Activated CD4-positive, alpha-beta memory T cell treated with anti-CD3 and anti-CD28 coated beads, Interleukin-2, amount 10 ng/mL, durations not matched to agents 7 days and 5 days (primary cell): ENCODE measurements at regions of chr19 and their contacts with region 1.

Region 1: GRCh38 chr19:29622138-29623070 is 16.3 kb downstream of the POP4 start:
- DNase-seq: peak; percentile 44
- H3K4me3 Mint-ChIP-seq: peak overlapping the region; percentile 86
- H3K27ac Mint-ChIP-seq: peak overlapping the region; percentile 97
- H3K4me1 Mint-ChIP-seq: peaks cover 65% of the 10 kb centered on the region
- H3K27me3 Mint-ChIP-seq: no peaks in the 10 kb centered on the region

Region 2: DNA sequence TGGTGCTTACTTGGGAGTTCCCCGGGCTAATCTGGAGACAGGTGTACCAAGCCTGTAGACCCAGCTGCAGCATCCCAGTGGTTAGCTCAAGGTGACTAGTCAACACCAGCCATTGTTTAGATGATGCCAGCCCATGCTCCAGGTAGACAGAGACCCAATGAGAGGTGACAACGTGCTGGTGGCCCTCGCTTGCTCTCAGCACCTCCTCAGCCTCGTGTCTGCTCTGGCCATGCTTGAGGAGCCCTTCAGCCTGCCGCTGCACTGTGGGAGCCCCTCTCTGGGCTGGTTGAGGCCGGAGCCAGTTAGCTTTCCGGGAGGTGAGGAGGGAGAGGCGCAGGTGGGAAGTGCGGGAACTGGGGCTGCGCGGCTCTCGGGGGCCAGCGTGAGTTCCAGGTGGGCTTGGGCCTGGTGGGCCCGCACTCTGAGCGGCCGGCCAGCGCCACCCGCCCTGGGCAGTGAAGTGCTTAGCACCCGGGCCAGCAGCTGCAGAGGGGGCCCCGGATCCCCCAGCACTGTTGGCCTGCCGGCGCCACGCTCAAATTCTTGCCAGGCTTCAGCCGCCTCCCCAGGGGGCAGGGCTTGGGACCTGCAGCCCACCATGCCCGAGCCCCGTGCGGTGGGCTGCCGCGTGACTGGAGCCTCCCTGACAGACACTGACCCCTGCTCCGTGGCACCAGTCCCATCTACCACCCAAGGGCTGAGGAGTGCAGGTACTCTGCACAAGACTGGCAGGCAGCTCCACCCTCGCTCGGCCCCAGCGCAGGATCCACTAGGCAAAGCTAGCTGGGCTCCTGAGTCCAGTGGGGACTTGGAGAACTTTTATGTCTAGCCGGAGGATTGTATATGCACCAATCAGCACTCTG is 182.5 kb before region 1 on chr19:
- CTCF ChIA-PET with region 1: no interaction called
- POLR2A ChIA-PET with region 1: no interaction called
- DNase-seq: no peak
- H3K4me3 Mint-ChIP-seq: no peak overlapping the region
- H3K27ac Mint-ChIP-seq: no peak overlapping the region
- H3K4me1 Mint-ChIP-seq: no peaks in the 10 kb centered on the region
- H3K27me3 Mint-ChIP-seq: no peaks in the 10 kb centered on the region

Region 3: DNA sequence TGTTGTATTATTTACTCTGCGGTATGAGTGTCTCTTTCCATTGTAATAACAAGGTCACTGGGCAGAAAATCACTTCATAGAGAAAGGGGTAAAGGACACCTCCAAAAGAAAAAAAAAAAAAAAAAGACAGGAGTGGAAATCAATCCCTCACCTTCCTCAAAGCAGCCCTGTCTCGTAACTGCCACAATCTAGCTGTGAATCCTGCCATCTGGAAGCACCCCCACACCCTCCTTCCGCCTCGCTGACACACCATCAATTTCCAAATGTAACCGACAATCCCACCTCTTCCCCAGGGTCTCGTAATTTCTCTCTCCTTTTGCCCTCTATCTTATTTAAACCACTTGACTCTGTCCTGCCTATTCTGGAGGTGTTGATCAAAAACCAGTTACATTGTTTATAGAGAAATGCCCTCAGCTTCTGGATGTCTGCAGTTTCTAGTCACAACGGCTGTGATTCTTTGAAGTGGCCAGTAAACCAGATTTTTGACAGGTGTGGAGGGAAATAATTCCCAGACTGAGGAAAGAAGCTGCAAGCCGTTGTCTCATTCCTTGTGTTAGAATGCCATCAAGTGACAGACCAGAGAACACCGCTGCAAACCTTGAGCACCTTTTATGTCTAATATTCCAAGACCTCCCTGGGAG is 25.4 kb before region 1 on chr19:
- CTCF ChIA-PET with region 1: no interaction called
- POLR2A ChIA-PET with region 1: no interaction called
- DNase-seq: no peak
- H3K4me3 Mint-ChIP-seq: no peak overlapping the region
- H3K27ac Mint-ChIP-seq: no peak overlapping the region
- H3K4me1 Mint-ChIP-seq: no peaks in the 10 kb centered on the region
- H3K27me3 Mint-ChIP-seq: peaks cover 33% of the 10 kb centered on the region

Region 4: GRCh38 chr19:29634423-29635130 is 12.2 kb after region 1 on chr19:
- CTCF ChIA-PET with region 1: interaction called, 6 read pairs
- POLR2A ChIA-PET with region 1: interaction called, 14 read pairs
- DNase-seq: no peak
- H3K4me3 Mint-ChIP-seq: no peak overlapping the region
- H3K27ac Mint-ChIP-seq: no peak overlapping the region
- H3K4me1 Mint-ChIP-seq: no peaks in the 10 kb centered on the region
- H3K27me3 Mint-ChIP-seq: peaks cover 3% of the 10 kb centered on the region

Region 5: DNA sequence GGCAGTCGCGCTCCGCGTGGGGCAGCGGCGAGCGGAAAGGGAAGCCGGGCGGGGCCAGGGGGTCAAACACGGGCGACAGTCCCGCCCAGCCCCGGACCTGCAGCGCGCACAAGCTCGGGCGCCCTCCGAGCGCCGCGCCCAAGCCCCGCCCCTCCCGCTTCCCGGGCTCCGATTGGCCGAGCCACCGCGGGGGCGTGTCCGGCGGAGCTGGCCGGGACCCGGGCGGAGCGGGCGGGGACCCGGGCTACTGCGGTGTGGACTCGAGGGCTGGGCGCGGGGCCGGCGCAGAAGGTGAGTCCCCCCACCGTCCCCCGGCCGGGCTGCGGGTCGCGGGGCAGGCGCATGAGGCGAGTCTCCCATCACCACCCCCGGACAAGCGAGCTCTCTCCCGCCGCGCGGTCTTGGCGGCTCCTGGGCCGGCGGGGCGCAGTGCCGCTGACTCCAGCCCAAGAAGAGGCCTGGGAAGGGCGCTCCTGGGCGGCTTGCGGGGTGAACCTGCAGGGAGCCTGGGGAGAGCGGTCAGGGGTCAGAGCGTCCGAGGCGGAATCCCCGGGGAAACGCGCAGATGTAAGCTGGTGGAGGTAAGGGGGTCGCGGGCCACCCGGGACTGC is 42.9 kb after region 1 on chr19 and contains the start of gene PLEKHF1:
- CTCF ChIA-PET with region 1: interaction called, 95 read pairs
- POLR2A ChIA-PET with region 1: interaction called, 124 read pairs
- DNase-seq: peak; percentile 90
- H3K4me3 Mint-ChIP-seq: peak within 1 kb of the TSS; percentile 94
- H3K27ac Mint-ChIP-seq: peak within 1 kb of the TSS; percentile 97
- H3K4me1 Mint-ChIP-seq: peaks cover 63% of the 10 kb centered on the region
- H3K27me3 Mint-ChIP-seq: peaks cover 1% of the 10 kb centered on the region
- total RNA-seq, gene PLEKHF1: 53.1 to 53.9 TPM

Region 6: GRCh38 chr19:29671393-29672160 is 49.2 kb after region 1 on chr19:
- CTCF ChIA-PET with region 1: interaction called, 95 read pairs
- POLR2A ChIA-PET with region 1: interaction called, 124 read pairs
- DNase-seq: peak; percentile 94
- H3K4me3 Mint-ChIP-seq: peak overlapping the region; percentile 65
- H3K27ac Mint-ChIP-seq: peak overlapping the region; percentile 97
- H3K4me1 Mint-ChIP-seq: peaks cover 93% of the 10 kb centered on the region
- H3K27me3 Mint-ChIP-seq: no peaks in the 10 kb centered on the region

Region 7: GRCh38 chr19:29680447-29680846 is 58.0 kb after region 1 on chr19:
- CTCF ChIA-PET with region 1: interaction called, 3 read pairs
- POLR2A ChIA-PET with region 1: interaction called, 14 read pairs
- DNase-seq: peak; percentile 93
- H3K4me3 Mint-ChIP-seq: peak overlapping the region; percentile 56
- H3K27ac Mint-ChIP-seq: peak overlapping the region; percentile 88
- H3K4me1 Mint-ChIP-seq: peaks cover 63% of the 10 kb centered on the region
- H3K27me3 Mint-ChIP-seq: no peaks in the 10 kb centered on the region

Region 8: GRCh38 chr19:29694669-29695627 is 72.5 kb after region 1 on chr19:
- CTCF ChIA-PET with region 1: interaction called, 11 read pairs
- POLR2A ChIA-PET with region 1: interaction called, 7 read pairs
- DNase-seq: peak; percentile 85
- H3K4me3 Mint-ChIP-seq: no peak overlapping the region
- H3K27ac Mint-ChIP-seq: peak overlapping the region; percentile 49
- H3K4me1 Mint-ChIP-seq: peaks cover 19% of the 10 kb centered on the region
- H3K27me3 Mint-ChIP-seq: no peaks in the 10 kb centered on the region

Region 9: DNA sequence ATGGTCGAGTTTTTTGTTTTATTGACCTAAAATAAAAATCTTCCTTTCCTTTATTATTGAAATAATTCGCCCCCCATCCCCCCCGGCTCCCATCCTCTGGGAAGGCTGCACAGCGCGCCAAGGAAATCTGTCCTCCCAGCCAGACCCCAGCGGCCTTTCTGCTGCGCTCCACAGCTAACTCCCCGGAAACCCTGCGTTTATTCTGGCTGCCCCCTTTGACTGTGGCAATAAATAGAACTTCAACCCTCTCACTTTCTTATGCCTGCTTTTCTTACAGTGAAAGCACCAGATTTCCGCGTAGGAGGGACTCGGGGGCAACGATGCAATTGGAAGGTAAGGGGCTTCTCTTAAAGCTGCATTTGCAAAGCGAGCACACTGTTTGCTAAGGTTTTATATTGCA is 102.3 kb after region 1 on chr19:
- CTCF ChIA-PET with region 1: no interaction called
- POLR2A ChIA-PET with region 1: no interaction called
- DNase-seq: no peak
- H3K4me3 Mint-ChIP-seq: no peak overlapping the region
- H3K27ac Mint-ChIP-seq: no peak overlapping the region
- H3K4me1 Mint-ChIP-seq: peaks cover 6% of the 10 kb centered on the region
- H3K27me3 Mint-ChIP-seq: peaks cover 49% of the 10 kb centered on the region

Region 10: DNA sequence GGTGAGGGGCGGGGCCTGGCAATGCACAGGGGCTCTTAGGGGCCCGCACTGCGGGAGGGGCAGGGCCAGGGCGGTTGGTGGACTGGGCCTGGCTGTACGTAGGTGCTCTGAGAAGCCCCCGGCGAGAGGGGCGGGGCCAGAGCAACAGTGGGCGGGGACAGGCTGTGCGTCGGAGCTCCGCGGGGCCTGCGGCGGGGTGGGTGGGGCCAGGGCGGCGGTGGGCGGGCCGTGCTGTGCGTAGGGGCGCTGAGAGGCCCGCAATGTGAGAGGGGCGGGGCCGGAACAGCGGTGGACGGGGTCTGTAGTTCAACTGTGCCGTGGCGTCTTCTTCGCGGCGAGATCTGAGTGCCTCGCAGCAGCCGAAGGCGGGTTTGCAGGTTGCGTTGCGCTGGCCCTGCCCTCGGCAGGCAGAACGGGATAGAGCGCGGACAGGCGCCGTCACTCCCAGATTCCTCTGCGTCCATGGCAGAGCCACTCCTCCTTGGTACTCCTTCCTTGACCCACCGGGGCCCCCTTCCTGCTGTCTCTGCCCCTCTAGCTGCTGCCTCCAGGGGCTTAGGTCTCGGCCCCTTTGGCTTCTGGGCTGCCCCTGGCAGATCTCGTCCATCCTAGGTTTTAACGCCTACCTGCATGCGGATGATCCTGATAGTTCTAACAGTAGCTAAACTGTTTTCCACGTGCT is 222.6 kb after region 1 on chr19:
- CTCF ChIA-PET with region 1: no interaction called
- POLR2A ChIA-PET with region 1: no interaction called
- DNase-seq: peak; percentile 94
- H3K4me3 Mint-ChIP-seq: peak overlapping the region; percentile 80
- H3K27ac Mint-ChIP-seq: peak overlapping the region; percentile 78
- H3K4me1 Mint-ChIP-seq: peaks cover 17% of the 10 kb centered on the region
- H3K27me3 Mint-ChIP-seq: peaks cover 13% of the 10 kb centered on the region